Activated naive CD4-positive, alpha-beta T cell treated with anti-CD3 and anti-CD28 coated beads for 36 hours (primary cell): ENCODE measurements at regions of chr2 and their contacts with region 1.

Region 1: DNA sequence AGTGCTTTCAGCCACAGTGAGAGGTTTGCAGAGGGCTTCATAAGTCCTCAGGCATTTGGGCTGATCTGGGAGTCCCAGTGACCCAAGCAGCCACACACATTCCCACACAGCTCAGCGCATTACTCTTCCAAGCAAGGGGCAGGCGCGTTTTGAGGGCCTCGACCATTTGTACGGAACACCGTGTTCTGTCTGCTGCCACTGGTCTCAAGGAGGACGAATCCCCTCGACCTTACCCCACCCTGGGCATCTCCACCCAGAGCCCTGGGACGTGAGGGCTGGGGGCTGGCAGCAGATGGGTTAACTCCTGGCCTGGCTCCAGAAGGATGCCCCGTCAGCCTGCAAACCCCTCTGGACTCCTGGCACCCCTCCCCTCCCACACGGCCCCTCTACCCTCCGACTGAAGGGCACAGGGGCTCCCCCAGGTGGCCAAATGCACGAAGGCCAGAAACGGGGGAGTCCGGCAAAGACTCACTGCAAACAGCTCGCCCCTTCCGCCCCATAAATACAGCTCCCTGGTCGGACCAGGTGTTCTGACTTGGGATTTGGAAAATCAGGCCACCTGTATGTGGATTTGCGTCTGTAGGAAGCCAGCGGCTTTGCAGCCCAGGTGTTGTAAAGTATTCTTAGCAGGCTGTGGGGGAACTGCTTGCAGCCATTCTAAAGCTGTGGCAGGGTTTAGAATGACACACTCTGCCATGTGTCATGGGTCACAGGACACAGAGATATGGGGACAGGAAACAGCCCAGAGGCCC is 33.6 kb upstream of the PTMA start:
- DNase-seq: peak; percentile 72
- H3K4me3 Mint-ChIP-seq: no peak overlapping the region
- H3K27ac Mint-ChIP-seq: no peak overlapping the region
- H3K4me1 Mint-ChIP-seq: peaks cover 8% of the 10 kb centered on the region
- H3K27me3 Mint-ChIP-seq: no peaks in the 10 kb centered on the region

Region 2: GRCh38 chr2:231563378-231563961 is 111.3 kb before region 1 on chr2:
- CTCF ChIA-PET with region 1: interaction called, 4 read pairs
- intact Hi-C with region 1: loop called (anchors 1 kb)
- DNase-seq: peak; percentile 74
- H3K4me3 Mint-ChIP-seq: no peak overlapping the region
- H3K27ac Mint-ChIP-seq: no peak overlapping the region
- H3K4me1 Mint-ChIP-seq: peaks cover 2% of the 10 kb centered on the region
- H3K27me3 Mint-ChIP-seq: no peaks in the 10 kb centered on the region

Region 3: GRCh38 chr2:231662028-231662810 is 12.5 kb before region 1 on chr2:
- CTCF ChIA-PET with region 1: interaction called, 36 read pairs
- intact Hi-C with region 1: loop called (anchors 1 kb)
- DNase-seq: peak; percentile 96
- H3K4me3 Mint-ChIP-seq: peak overlapping the region; percentile 74
- H3K27ac Mint-ChIP-seq: peak overlapping the region; percentile 92
- H3K4me1 Mint-ChIP-seq: peaks cover 17% of the 10 kb centered on the region
- H3K27me3 Mint-ChIP-seq: no peaks in the 10 kb centered on the region

Region 4: GRCh38 chr2:231696007-231696371 is 21.2 kb after region 1 on chr2:
- CTCF ChIA-PET with region 1: interaction called, 75 read pairs
- intact Hi-C with region 1: no loop called
- DNase-seq: no peak
- H3K4me3 Mint-ChIP-seq: no peak overlapping the region
- H3K27ac Mint-ChIP-seq: no peak overlapping the region
- H3K4me1 Mint-ChIP-seq: no peaks in the 10 kb centered on the region
- H3K27me3 Mint-ChIP-seq: no peaks in the 10 kb centered on the region

Region 5: GRCh38 chr2:231713730-231714430 is 39.1 kb after region 1 on chr2:
- CTCF ChIA-PET with region 1: interaction called, 408 read pairs
- intact Hi-C with region 1: loop called (anchors 1 kb)
- DNase-seq: peak; percentile 95
- H3K4me3 Mint-ChIP-seq: peak overlapping the region; percentile 46
- H3K27ac Mint-ChIP-seq: peak overlapping the region; percentile 94
- H3K4me1 Mint-ChIP-seq: peaks cover 27% of the 10 kb centered on the region
- H3K27me3 Mint-ChIP-seq: no peaks in the 10 kb centered on the region

Region 6: DNA sequence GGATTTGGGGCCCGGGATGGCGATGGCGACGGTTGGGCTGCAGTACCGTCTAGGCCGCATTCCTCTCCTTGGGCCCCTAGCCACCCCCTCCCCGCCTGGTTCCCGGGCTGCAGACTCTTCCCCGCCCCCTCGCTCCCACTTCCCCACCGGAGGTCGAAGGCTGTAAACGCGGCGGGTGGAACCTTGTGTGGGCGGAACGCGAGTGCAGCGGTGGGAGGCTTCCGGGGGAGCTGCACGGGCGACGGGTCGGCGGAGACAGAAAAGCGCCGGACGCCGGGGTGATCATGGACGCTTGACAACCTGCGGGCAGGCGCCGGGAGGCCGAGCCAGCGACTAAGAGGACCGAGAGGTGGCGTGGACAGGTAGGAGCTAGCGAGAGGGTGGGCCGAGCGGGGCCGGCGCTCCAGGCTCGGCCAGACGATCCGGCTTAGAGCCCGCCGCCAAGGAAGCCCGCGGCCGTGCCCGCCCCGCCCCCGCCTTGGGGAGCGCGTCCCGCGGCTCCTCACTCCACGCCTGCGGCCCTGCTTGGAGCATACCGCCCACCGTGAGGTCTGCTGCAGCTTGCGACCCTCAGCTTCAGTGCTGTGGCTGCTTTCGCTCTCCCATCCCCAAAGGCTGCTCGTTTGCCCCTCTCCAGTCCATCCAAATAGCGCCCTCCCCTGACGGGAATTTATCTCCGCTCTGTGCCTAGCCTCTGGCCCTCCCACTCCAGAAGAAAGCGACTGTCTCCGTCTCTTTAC is 111.6 kb after region 1 on chr2 and contains the start of gene COPS7B:
- CTCF ChIA-PET with region 1: interaction called, 11 read pairs
- intact Hi-C with region 1: no loop called
- DNase-seq: peak; percentile 88
- H3K4me3 Mint-ChIP-seq: peak within 1 kb of the TSS; percentile 86
- H3K27ac Mint-ChIP-seq: peak within 1 kb of the TSS; percentile 84
- H3K4me1 Mint-ChIP-seq: peaks cover 66% of the 10 kb centered on the region
- H3K27me3 Mint-ChIP-seq: no peaks in the 10 kb centered on the region
- total RNA-seq, gene COPS7B: 47.3 to 52.8 TPM